B cell (primary cell): ENCODE measurements at regions of chr22 and their contacts with region 1.

Region 1: DNA sequence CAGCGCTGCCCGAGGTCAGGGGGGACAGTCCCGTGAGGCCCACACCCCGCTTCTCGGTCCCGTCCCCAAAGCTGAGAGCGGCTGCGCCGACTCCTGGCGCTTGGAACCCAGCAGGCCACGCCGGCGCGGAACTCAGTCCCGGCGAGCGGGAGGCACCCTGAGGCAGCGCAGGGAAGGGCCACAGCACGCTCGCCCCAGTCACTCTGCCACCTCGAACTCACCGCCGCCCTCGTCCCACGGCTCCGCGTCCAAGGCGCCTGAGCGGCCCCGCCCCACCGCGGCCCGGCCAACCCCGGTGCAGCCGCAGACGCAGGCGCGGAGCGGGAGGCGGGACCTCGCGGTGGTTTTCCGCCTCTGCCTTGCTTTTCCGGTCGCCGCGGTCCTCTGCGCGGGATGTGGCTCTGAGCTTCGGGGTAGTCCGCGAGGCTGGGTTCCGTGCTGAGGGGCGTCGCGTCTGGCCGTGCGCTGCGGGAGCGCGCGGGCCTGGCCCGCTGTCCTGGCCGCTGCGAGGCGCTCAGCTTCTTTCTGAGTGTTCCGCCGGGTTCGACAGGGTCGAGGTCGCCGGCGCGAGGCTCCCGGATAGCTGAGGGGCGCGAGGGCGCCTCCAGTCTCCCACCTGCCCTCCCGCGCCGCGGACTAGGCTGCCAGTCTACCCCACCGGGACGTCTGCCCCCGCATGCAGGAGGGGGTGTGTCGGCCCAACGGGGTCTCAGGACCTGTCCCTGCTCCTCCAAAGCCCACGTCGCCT is at the start of gene CDPF1:
- DNase-seq: peak; percentile 91
- ATAC-seq: peak; percentile 96
- H3K4me3 ChIP-seq: peak within 1 kb of the TSS in 4 of 5 experiments; percentile 72 to 85 (median 82)
- H3K4me3 Mint-ChIP-seq: peak within 1 kb of the TSS; percentile 87
- H3K27ac ChIP-seq: peak within 1 kb of the TSS; percentile 35 to 75
- H3K27ac Mint-ChIP-seq: peak within 1 kb of the TSS; percentile 80
- H3K4me1 ChIP-seq: peaks cover 14% of the 10 kb centered on the region in 2 donors
- H3K4me1 Mint-ChIP-seq: peaks cover 18% of the 10 kb centered on the region
- H3K27me3 ChIP-seq: no peaks in the 10 kb centered on the region
- H3K27me3 Mint-ChIP-seq: no peaks in the 10 kb centered on the region
- CTCF ChIP-seq: no peak
- total RNA-seq, gene CDPF1: 9.8 TPM in 2 replicates

Region 2: GRCh38 chr22:45831394-45831793 is 418.8 kb before region 1 on chr22:
- CTCF ChIA-PET with region 1: no interaction called
- POLR2A ChIA-PET with region 1: no interaction called
- intact Hi-C with region 1: no loop called
- DNase-seq: no peak
- ATAC-seq: no peak
- H3K4me3 ChIP-seq: no peak overlapping the region
- H3K4me3 Mint-ChIP-seq: no peak overlapping the region
- H3K27ac ChIP-seq: no peak overlapping the region
- H3K27ac Mint-ChIP-seq: no peak overlapping the region
- H3K4me1 ChIP-seq: no peaks in the 10 kb centered on the region
- H3K4me1 Mint-ChIP-seq: peaks cover 14% of the 10 kb centered on the region
- H3K27me3 ChIP-seq: no peaks in the 10 kb centered on the region
- H3K27me3 Mint-ChIP-seq: no peaks in the 10 kb centered on the region
- CTCF ChIP-seq: peak; percentile 9

Region 3: DNA sequence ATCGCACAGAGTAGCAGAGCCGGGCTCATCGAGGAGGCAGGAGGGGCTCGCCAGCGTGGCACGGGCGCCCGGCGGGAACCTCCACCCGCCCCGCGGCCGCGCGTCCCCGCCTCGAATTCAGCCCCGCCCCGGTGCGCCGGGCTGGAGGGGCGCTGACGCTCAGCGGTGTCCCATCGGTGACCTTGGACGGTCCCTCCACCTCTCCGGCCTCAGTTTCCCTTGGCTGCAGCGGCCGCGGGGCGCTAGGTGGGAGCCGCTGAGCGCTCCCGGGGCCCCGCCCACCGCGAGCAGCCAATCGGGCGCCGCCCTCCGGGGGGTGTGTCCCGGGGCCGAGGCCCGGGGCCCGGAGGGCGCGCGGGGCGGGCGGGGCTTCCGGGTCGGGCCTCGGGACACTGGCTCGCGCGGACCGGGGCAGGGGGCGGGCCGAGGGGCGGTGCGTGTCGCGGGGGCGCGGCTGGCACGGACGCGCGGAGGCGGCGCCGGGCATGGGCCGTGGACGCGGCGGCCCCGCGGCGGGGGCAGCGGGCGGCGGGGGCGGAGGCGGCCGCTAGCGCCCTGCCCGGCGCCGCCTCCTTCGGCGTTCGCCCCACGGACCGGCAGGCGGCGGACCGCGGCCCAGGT is 100.1 kb before region 1 on chr22 and contains the start of gene PPARA:
- CTCF ChIA-PET with region 1: no interaction called
- POLR2A ChIA-PET with region 1: interaction called, 4 read pairs
- intact Hi-C with region 1: loop called (anchors 1 kb)
- DNase-seq: peak; percentile 89
- ATAC-seq: peak; percentile 84
- H3K4me3 ChIP-seq: peak within 1 kb of the TSS; percentile 53 to 88 (median 72)
- H3K4me3 Mint-ChIP-seq: peak within 1 kb of the TSS; percentile 88
- H3K27ac ChIP-seq: peak within 1 kb of the TSS; percentile 60 to 69
- H3K27ac Mint-ChIP-seq: peak within 1 kb of the TSS; percentile 84
- H3K4me1 ChIP-seq: peaks cover 12 to 23% of the 10 kb centered on the region in 2 donors
- H3K4me1 Mint-ChIP-seq: peaks cover 21% of the 10 kb centered on the region
- H3K27me3 ChIP-seq: no peaks in the 10 kb centered on the region
- H3K27me3 Mint-ChIP-seq: no peaks in the 10 kb centered on the region
- CTCF ChIP-seq: no peak
- total RNA-seq, gene PPARA: 28.3 and 29.8 TPM in 2 replicates

Region 4: DNA sequence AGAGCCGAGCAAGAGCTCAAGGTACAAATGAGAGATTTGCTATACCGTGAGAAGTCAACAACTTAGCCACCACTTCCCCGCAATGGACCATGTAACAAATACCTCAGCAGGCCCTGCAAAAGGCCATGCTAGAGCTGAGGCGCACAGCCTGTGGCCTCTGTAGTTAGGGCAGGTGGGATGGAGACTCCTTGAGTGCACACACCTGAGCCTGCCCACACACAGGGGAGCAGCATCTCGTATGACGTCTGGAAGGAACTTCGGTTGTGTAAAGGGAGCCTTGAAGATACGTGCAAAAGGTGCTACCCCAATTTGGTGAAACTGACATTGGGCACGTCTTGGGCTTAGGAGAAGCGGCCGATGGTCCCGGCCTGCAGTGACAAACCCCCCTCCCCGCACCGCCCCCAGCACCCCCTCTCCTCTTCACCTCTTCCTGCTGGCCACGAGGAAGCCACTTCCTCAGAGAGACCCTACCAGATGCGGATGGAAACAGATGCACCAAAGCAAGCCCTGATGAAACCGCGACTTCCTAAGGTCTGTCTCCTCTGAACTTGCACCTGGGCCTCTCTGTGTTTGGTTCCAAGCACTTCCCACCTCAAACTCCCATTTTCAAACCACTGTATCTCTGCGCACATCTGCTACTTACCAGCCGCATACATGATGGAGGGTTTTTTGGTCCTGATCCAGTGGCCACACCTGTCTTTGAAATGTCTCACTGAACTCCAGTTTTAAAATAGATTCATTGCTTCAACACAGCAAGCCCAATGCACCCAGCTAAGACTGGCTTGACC is 10.8 kb before region 1 on chr22:
- CTCF ChIA-PET with region 1: no interaction called
- POLR2A ChIA-PET with region 1: no interaction called
- intact Hi-C with region 1: no loop called
- DNase-seq: peak; percentile 26
- ATAC-seq: peak; percentile 24
- H3K4me3 ChIP-seq: no peak overlapping the region
- H3K4me3 Mint-ChIP-seq: peak overlapping the region; percentile 52
- H3K27ac ChIP-seq: no peak overlapping the region
- H3K27ac Mint-ChIP-seq: peak overlapping the region; percentile 82
- H3K4me1 ChIP-seq: peaks cover 18 to 23% of the 10 kb centered on the region in 2 donors
- H3K4me1 Mint-ChIP-seq: peaks cover 21% of the 10 kb centered on the region
- H3K27me3 ChIP-seq: no peaks in the 10 kb centered on the region
- H3K27me3 Mint-ChIP-seq: no peaks in the 10 kb centered on the region
- CTCF ChIP-seq: no peak

Region 5: GRCh38 chr22:46267431-46268279 is 17.4 kb after region 1 on chr22 and contains the start of gene TTC38:
- CTCF ChIA-PET with region 1: no interaction called
- POLR2A ChIA-PET with region 1: interaction called, 10 read pairs
- intact Hi-C with region 1: loop called (anchors 1 kb)
- DNase-seq: peak; percentile 62
- ATAC-seq: peak; percentile 95
- H3K4me3 ChIP-seq: peak within 1 kb of the TSS in 4 of 5 experiments; percentile 68 to 80 (median 72)
- H3K4me3 Mint-ChIP-seq: peak within 1 kb of the TSS; percentile 85
- H3K27ac ChIP-seq: peak within 1 kb of the TSS in 1 of 2 donors; percentile 49
- H3K27ac Mint-ChIP-seq: peak within 1 kb of the TSS; percentile 46
- H3K4me1 ChIP-seq: peaks cover 4 to 8% of the 10 kb centered on the region in 2 donors
- H3K4me1 Mint-ChIP-seq: peaks cover 16% of the 10 kb centered on the region
- H3K27me3 ChIP-seq: peaks cover 0 to 13% (median 8%) of the 10 kb centered on the region in 4 experiments
- H3K27me3 Mint-ChIP-seq: peaks cover 26% of the 10 kb centered on the region
- CTCF ChIP-seq: no peak
- total RNA-seq, gene TTC38: 13.3 and 14.9 TPM in 2 replicates

Region 6: DNA sequence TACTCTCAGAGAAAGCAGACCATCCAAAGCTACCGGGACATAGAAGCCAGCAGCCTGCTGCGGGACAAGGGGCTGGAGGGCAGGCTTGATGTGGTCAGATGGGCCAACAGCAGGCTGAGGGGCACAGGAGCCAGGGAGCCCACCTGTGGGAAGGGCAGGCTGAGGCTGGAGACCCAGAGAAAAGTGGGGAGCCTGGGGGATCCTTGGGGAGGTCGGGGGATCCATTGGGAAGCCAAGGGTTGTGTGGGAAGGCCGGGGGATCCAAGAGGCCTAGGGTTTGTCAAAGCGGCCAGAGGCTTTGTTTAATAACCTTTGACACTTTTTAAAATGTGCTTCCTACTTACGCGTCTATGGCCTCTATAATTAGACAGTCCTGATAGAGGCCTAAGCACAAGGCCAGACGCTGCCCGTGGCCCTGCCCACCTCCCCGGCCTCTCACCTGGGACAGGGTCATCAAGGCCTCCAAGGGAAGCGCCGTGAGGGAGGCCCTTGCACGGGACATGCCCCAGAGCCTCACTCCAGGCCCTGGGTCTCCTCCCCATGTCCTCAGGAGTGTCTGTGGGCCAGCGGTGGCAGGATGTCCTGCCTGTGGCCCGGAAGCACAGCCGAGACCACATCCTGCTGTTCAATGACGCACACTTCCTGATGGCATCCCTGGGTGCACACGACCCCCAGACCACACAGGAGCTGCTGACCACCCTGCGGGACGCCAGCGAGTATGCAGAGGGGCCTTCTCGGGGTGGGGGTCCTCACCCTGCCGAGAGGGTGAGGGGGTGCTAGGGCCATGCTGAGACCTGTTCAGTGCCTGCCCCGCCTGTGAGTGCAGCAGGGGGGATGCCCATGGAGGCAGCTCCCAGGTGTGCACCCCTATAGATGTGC is 37.9 kb after region 1 on chr22:
- CTCF ChIA-PET with region 1: no interaction called
- POLR2A ChIA-PET with region 1: no interaction called
- intact Hi-C with region 1: loop called (anchors 2 kb)
- DNase-seq: peak; percentile 50
- ATAC-seq: peak; percentile 72
- H3K4me3 ChIP-seq: peak overlapping the region in 4 of 5 experiments; percentile 27 to 53 (median 38)
- H3K4me3 Mint-ChIP-seq: peak overlapping the region; percentile 81
- H3K27ac ChIP-seq: peak overlapping the region; percentile 33 to 70
- H3K27ac Mint-ChIP-seq: peak overlapping the region; percentile 88
- H3K4me1 ChIP-seq: peaks cover 35 to 50% of the 10 kb centered on the region in 2 donors
- H3K4me1 Mint-ChIP-seq: peaks cover 48% of the 10 kb centered on the region
- H3K27me3 ChIP-seq: no peaks in the 10 kb centered on the region
- H3K27me3 Mint-ChIP-seq: no peaks in the 10 kb centered on the region
- CTCF ChIP-seq: no peak